ENCODE measurements at regions of chr6 and their contacts with region 1.

Region 1: GRCh38 chr6:112180095-112180820 is 74.1 kb downstream of the LAMA4 start:
- DNase-seq: peak; percentile 92
- H3K4me3 Mint-ChIP-seq: no peak overlapping the region
- H3K27ac Mint-ChIP-seq: no peak overlapping the region
- H3K4me1 Mint-ChIP-seq: peaks cover 5% of the 10 kb centered on the region
- H3K27me3 Mint-ChIP-seq: no peaks in the 10 kb centered on the region
- CTCF ChIP-seq: peak; percentile 56

Region 2: DNA sequence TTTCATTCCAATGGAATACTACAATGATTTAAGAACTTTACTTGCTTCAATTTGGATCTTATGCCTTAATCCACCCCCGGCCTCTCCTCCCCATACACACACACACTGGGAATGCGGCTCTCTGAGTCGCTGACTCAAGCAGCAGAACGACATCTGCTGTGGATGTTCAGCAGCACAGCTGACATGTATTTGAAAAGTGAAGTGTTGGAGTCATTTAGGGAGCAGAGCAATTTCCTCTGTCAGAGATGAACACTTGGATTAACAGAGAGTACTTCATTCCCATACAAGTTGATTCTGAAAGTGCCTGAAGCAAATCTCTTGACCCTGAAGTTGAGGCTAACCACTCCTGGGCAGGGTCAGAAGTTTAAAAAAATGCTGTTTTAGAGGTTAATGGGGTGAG is 102.0 kb after region 1 on chr6:
- CTCF ChIA-PET with region 1: interaction called, 31 read pairs
- POLR2A ChIA-PET with region 1: interaction called, 6 read pairs
- intact Hi-C with region 1: loop called (anchors 1 kb)
- DNase-seq: peak; percentile 64
- H3K4me3 Mint-ChIP-seq: no peak overlapping the region
- H3K27ac Mint-ChIP-seq: peak overlapping the region; percentile 25
- H3K4me1 Mint-ChIP-seq: peaks cover 6% of the 10 kb centered on the region
- H3K27me3 Mint-ChIP-seq: no peaks in the 10 kb centered on the region
- CTCF ChIP-seq: peak; percentile 31

Region 3: DNA sequence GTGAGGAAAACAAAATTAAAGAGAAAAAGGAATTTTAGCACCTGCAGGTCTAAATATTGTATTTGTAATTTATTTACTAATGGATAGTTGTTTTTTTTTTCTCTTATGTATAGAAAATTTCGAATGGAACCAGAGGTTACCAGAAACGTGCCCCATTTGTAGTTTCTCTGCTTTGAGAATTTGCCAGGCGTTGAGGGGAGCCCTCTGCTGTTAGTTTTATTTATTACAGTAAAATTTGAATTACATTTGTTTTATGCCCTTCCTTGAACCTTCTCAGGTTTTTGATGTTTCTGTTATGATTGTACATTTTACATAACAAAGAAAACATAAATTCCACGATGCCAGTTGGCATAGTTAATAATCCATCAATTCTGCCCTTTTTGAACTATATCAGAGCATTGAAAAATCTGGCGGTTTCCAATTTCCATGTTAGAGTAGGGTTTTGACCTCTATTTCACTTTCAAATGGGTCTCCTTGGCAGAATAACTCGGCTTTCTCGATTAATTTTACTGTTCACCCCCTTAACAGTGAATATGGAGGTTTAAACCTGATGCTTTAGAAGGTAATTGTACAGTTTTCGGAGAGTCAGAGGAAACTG is 131.8 kb after region 1 on chr6:
- CTCF ChIA-PET with region 1: interaction called, 140 read pairs
- POLR2A ChIA-PET with region 1: interaction called, 19 read pairs
- intact Hi-C with region 1: loop called (anchors 1 kb)
- DNase-seq: peak; percentile 49
- H3K4me3 Mint-ChIP-seq: no peak overlapping the region
- H3K27ac Mint-ChIP-seq: peak overlapping the region; percentile 13
- H3K4me1 Mint-ChIP-seq: peaks cover 13% of the 10 kb centered on the region
- H3K27me3 Mint-ChIP-seq: no peaks in the 10 kb centered on the region
- CTCF ChIP-seq: peak; percentile 31

Region 4: DNA sequence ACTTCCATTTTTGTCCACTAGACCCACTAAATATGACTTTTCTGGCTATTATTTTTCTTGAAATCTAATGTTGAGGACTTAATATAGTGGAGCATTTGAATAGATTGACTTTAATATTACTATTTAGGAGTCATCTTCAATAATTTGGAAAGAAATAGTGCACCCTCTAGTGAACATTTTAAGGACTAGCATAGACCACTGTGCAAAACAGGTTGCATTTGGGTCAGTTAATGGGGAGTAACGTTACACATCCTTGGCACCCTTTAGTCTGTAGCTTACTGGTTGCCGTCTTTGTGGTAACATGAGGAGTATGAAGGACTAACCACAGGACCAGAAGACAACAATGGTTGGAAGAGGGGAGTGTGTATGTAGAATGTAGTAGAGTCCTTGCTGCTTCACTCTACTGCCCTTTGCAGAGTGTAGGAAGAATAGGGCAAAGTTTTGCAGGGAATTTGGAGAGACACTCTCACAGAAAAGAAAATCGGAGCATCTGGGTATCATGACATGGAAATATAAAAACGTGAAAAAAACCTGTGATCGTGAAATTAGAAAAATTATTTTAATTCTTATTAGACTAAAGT is 192.1 kb after region 1 on chr6:
- CTCF ChIA-PET with region 1: interaction called, 34 read pairs
- POLR2A ChIA-PET with region 1: no interaction called
- intact Hi-C with region 1: no loop called
- DNase-seq: peak; percentile 47
- H3K4me3 Mint-ChIP-seq: no peak overlapping the region
- H3K27ac Mint-ChIP-seq: no peak overlapping the region
- H3K4me1 Mint-ChIP-seq: peaks cover 5% of the 10 kb centered on the region
- H3K27me3 Mint-ChIP-seq: no peaks in the 10 kb centered on the region
- CTCF ChIP-seq: peak; percentile 36

Measured in MCF 10A (cell line).